Mammary epithelial cell (primary cell): ENCODE measurements at regions of chr5 and their contacts with region 1.

Region 1: GRCh38 chr5:56825222-56825824 is 10.0 kb downstream of the MAP3K1 start:
- DNase-seq: no peak
- H3K4me3 ChIP-seq: no peak overlapping the region
- H3K27ac ChIP-seq: no peak overlapping the region
- H3K4me1 ChIP-seq: peaks cover 6% of the 10 kb centered on the region
- H3K27me3 ChIP-seq: no peaks in the 10 kb centered on the region
- CTCF ChIP-seq: no peak

Region 2: GRCh38 chr5:57190593-57190992 is 365.3 kb after region 1 on chr5:
- CTCF ChIA-PET with region 1: interaction called, 27 read pairs
- dilution Hi-C with region 1: no loop called
- in situ Hi-C with region 1: no loop called
- intact Hi-C with region 1: no loop called
- DNase-seq: no peak
- H3K4me3 ChIP-seq: no peak overlapping the region
- H3K27ac ChIP-seq: no peak overlapping the region
- H3K4me1 ChIP-seq: peaks cover 4% of the 10 kb centered on the region
- H3K27me3 ChIP-seq: no peaks in the 10 kb centered on the region
- CTCF ChIP-seq: no peak